Activated T-helper 2 cell treated with anti-CD3 and anti-CD28 coated beads, Interferon-gamma antibody, Interleukin-2, Interleukin-4, amounts not matched to agents 10 μg/mL and 5 μg/mL and 100 μg/mL, durations not matched to agents 14 hours and 24 hours and 36 hours (primary cell): ENCODE measurements at regions of chr15 and their contacts with region 1.

Region 1: DNA sequence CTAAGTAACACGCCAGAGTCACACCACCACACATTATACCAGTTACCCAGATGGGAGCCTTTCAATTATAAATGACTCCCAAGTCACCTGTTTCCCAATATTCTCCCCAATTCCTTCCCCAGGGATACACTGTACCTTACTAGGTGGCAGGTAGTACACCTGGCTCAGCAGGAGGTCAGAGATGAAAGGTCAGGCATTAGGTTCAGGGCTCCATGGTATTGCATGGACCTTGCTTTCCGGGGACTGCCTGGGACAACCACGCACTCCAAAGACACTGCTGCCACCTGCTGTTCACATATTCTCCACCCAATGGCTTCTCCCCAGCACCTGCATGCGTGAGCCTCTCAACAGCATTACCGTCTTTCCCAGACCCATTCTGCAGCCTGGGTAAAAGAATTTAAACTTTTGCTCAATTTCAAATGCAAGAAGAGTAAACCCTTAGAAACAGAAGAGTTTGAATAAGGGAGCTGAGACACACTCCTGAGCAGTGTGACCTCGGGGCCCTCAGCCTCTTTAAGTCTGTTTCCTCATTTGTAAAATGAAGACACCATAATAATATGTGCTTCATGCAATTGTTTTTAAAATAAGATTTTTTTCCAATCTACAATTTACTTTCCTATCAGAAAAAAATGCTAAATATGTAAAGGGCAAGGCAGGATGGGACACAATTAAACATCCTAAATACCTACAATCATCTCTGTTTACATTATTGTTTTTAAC is 28.0 kb upstream of the LACTB start:
- DNase-seq: peak; percentile 54
- H3K4me3 Mint-ChIP-seq: no peak overlapping the region
- H3K27ac Mint-ChIP-seq: no peak overlapping the region
- H3K4me1 Mint-ChIP-seq: peaks cover 7% of the 10 kb centered on the region
- H3K27me3 Mint-ChIP-seq: peaks cover 6% of the 10 kb centered on the region

Region 2: DNA sequence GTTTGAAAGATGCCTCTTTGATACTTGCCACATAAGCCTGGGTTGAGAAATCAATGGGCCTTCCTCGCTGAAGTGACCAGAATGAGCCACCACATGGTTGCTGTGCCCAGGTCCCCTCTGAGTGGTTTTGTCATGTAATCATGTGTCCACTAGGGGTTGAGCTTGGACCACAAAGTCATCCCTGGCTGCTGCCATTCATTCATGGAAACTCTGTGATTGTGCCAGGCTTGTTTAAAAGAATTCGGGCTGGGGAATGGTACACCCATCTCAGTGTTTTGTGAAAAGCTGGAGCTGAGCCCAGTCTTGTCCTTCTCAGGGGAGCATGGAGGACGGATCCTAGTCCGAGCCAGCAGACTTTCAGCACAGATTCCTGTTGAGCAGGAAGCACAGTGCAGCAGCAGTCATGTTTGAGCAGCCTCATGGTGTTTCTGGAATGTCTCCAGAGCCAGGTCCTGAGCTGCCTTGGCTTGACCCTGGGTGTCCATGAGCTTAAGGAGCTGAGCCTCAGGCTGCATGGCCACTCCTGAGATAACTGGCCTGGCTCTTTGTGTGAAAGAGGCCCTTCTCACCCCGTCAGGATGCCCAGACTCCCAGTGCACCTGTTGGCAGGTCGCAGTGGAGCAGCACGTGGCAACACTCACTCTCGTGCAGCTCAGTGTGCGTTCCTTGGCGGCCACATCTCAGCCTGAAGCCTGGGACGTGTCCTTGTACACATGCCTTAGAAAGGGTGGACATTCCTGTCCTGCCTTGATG is 311.4 kb before region 1 on chr15:
- intact Hi-C with region 1: loop called (anchors 5 kb)
- DNase-seq: no peak
- H3K4me3 Mint-ChIP-seq: no peak overlapping the region
- H3K27ac Mint-ChIP-seq: no peak overlapping the region
- H3K4me1 Mint-ChIP-seq: no peaks in the 10 kb centered on the region
- H3K27me3 Mint-ChIP-seq: peaks cover 2% of the 10 kb centered on the region

Region 3: GRCh38 chr15:62847900-62848489 is 245.7 kb before region 1 on chr15:
- intact Hi-C with region 1: loop called (anchors 1 kb)
- DNase-seq: peak; percentile 15
- H3K4me3 Mint-ChIP-seq: no peak overlapping the region
- H3K27ac Mint-ChIP-seq: no peak overlapping the region
- H3K4me1 Mint-ChIP-seq: no peaks in the 10 kb centered on the region
- H3K27me3 Mint-ChIP-seq: peaks cover 3% of the 10 kb centered on the region

Region 4: GRCh38 chr15:63332367-63333124 is 238.9 kb after region 1 on chr15:
- intact Hi-C with region 1: no loop called
- DNase-seq: no peak
- H3K4me3 Mint-ChIP-seq: no peak overlapping the region
- H3K27ac Mint-ChIP-seq: no peak overlapping the region
- H3K4me1 Mint-ChIP-seq: peaks cover 6% of the 10 kb centered on the region
- H3K27me3 Mint-ChIP-seq: peaks cover 2% of the 10 kb centered on the region